ENCODE measurements at regions of chr1 and their contacts with region 1.

Region 1: DNA sequence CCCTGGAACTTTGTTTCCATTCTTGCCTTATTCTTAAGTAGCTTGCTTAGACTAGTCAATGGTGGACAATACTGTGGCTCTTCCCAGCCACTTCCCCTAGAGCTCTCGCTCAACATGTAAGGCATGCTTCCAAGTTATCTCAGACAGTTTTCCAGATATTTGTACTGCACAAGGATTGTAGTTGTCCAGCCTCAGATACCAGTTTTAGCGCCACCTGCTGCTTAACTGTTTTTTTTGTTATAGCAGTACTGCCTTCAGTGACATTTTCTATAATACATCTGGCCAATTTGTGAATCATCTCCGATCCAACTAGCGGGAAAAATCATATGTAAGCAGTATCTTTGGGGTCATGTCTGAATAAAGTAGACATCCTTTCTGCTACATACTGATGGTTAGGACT is 346.7 kb upstream of the ADGRL4 start:
- DNase-seq: peak; percentile 9
- H3K4me3 ChIP-seq: no peak overlapping the region
- CTCF ChIP-seq: peak; percentile 29

Region 2: GRCh38 chr1:78839704-78840277 is 513.4 kb before region 1 on chr1:
- CTCF ChIA-PET with region 1: interaction called, 16 read pairs
- POLR2A ChIA-PET with region 1: no interaction called
- DNase-seq: no peak
- H3K4me3 ChIP-seq: no peak overlapping the region
- CTCF ChIP-seq: peak; percentile 12

Region 3: DNA sequence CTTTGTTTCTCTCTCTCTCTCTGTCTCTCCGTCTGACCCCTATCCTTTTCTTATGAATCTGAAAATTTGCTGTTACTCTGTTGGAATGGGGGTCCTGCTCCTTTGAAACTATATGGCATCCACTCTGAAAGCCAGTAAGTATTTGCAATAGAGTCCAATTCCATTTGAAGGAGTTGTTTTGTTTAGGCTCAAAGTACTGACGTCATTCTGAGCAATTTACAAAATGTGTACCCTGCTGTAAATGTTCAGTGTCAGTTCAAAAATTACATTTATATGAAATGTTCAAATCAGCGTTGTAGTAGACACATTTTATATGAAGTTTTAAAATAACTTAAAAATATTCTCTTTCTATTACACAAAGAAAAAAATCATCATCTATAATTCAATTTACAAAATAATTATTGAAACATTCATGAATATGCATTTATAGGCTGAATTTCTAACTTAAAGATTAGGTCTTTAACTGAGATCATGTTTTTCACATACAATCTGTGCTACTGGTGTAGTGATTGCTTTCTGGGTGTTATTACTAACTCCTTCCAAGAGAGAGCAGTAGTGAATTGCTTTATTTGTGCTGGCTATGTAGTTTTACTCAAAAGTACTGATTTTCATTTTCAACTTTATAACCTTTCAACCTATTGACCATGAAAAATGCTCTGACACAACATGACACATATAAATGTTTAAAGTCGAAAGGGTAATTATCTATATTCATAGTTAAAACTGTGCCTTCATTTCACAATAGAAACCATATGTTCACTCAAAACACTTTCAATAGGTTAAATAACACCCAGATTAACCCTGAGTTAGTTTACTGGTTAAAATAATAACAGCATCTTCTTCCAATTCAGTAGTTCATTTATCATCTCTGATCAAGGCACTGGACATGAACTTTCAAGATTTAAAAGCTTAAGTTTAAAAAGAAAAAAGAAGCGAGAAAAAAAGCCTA is 93.6 kb before region 1 on chr1:
- CTCF ChIA-PET with region 1: interaction called, 54 read pairs
- POLR2A ChIA-PET with region 1: no interaction called
- DNase-seq: peak; percentile 12
- H3K4me3 ChIP-seq: no peak overlapping the region
- CTCF ChIP-seq: peak; percentile 44

Region 4: DNA sequence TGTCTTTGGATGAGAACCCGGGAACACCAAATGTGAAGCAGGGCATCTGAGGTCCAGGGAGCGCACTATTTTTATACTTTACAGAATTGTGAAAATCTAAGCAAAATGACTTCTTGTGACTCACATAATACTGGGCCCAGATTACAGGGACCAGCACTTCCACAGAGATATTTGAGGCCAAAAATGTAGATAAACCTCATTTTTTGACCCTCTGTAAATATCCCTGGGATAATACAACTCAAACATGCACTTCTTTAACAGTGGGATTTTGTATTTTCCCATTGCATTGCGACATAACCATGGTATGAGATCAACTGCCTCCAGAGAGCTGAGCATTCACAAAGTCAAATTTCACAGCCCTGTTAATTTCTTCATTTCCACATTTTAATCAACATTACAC is 57.3 kb before region 1 on chr1:
- CTCF ChIA-PET with region 1: no interaction called
- POLR2A ChIA-PET with region 1: no interaction called
- DNase-seq: no peak
- H3K4me3 ChIP-seq: no peak overlapping the region
- CTCF ChIP-seq: no peak

Region 5: GRCh38 chr1:79310609-79311008 is 42.6 kb before region 1 on chr1:
- CTCF ChIA-PET with region 1: no interaction called
- POLR2A ChIA-PET with region 1: no interaction called
- DNase-seq: no peak
- H3K4me3 ChIP-seq: no peak overlapping the region
- CTCF ChIP-seq: no peak